ENCODE measurements at regions of chr17 and their contacts with region 1.

Region 1: DNA sequence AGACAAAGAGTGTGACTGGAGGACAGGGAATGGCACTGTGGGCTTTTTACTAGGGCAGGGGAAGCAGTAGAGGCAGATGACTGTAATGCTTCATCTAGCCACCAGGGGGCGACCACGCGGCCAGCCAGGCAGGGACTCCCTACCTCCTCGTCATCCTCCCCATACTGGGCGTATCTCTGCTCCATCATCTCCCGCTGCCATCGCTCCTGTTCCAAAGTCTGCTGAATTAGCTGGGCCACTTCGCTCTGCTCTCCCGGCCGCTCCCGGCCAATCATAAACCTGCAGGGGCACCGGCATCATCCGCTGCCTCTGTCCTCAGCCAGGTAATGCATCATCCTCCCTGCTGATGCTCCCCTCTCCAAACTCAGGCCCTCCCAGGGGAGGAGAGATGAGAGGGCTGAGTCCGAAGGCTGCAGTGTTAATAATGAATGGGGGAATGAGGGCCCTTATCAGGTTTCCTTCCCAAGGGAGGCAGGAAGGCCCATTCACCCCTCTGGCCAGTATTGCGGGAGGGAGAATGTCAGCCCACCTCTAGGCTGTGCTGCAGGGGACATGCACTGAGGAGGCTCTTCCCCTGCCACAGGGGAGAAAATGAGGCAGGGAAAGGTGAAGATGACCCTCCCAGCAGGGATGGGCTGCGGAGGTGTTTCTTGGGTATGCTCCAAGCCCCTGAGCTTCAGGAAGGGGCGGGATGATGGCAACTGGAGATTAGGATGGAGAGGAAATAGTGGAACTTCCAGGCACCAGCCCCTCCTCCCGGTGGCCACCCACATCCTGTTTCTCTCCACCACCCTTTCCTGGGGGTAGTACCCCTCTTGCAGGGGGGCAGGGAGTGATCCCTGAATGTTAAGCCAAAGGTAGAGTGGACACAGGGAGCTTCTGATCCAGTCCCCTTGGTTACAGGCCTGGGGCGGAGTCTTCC is 10.3 kb upstream of the SAMD14 start:
- DNase-seq: peak; percentile 80 to 91
- ATAC-seq: peak; percentile 83 to 90 (median 88)
- H3K4me3 ChIP-seq: no peak overlapping the region
- H3K27ac ChIP-seq: peak overlapping the region; percentile 27
- H3K4me1 ChIP-seq: peaks cover 4% of the 10 kb centered on the region
- H3K27me3 ChIP-seq: no peaks in the 10 kb centered on the region
- CTCF ChIP-seq: peak; percentile 97

Region 2: GRCh38 chr17:50161023-50161910 is 21.1 kb after region 1 on chr17:
- intact Hi-C with region 1: loop called in 1 of 2 experiments (anchors 2 kb)
- DNase-seq: peak; percentile 94 to 95
- ATAC-seq: peak; percentile 75 to 82 (median 78)
- H3K4me3 ChIP-seq: peak overlapping the region; percentile 76
- H3K27ac ChIP-seq: peak overlapping the region; percentile 66
- H3K4me1 ChIP-seq: peaks cover 33% of the 10 kb centered on the region
- H3K27me3 ChIP-seq: no peaks in the 10 kb centered on the region
- CTCF ChIP-seq: peak; percentile 91

Region 3: DNA sequence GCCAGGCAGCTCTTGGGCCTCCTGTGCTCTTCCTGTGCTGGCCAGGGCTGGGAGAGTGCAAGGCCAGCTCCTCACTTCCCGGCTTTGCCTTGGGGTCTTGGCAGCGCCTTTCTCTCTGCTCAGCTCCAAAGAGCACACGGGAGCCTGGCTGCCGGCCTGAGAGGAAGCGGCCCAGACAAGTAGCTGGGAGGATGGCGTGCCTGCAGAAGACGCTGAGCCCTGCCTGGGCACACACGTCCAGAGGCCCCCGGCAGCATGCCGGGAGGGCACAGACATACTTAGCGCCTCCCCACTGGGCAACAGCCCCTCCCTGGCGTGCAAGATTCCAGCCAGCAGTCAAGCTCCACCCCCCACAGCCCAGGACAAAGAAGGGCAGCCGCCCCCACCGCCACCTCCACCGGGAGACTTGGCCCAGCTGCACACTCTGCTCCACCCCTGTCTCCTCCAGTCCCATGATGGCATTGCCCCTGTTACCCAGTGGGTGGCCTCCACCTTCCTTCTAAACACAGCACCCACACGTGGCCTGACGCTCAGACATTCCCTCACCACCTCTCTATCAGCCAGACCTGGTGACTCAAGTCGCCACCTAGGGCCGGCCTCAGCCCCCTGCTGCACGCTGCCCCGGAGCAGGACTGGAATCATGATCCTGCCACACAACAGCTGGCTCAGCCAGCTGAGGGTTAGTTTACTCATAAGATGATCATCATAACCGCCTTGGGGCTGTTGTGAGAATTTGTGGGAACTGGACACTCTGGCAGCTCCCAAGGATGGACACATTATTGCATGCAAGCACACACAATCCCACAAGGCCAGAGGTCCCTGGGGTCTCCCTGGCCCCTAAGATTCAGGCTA is 38.0 kb after region 1 on chr17:
- intact Hi-C with region 1: loop called in 1 of 2 experiments (anchors 5 kb)
- DNase-seq: peak; percentile 86 to 95
- ATAC-seq: peak; percentile 86 to 89 (median 88)
- H3K4me3 ChIP-seq: peak overlapping the region; percentile 44
- H3K27ac ChIP-seq: peak overlapping the region; percentile 88
- H3K4me1 ChIP-seq: peaks cover 37% of the 10 kb centered on the region
- H3K27me3 ChIP-seq: no peaks in the 10 kb centered on the region
- CTCF ChIP-seq: peak; percentile 46